CD4-positive, alpha-beta memory T cell (primary cell): ENCODE measurements at regions of chr12 and their contacts with region 1.

Region 1: GRCh38 chr12:14257734-14258574 is 107.5 kb upstream of the ATF7IP start:
- DNase-seq: peak; percentile 81 to 92 (median 84)
- H3K4me3 ChIP-seq: peak overlapping the region; percentile 1 to 31
- H3K4me3 Mint-ChIP-seq: peak overlapping the region; percentile 75 to 91 (median 84)
- H3K27ac ChIP-seq: peak overlapping the region; percentile 49
- H3K27ac Mint-ChIP-seq: peak overlapping the region; percentile 95 to 99 (median 98)
- H3K4me1 ChIP-seq: peaks cover 44% of the 10 kb centered on the region
- H3K4me1 Mint-ChIP-seq: peaks cover 35 to 57% (median 42%) of the 10 kb centered on the region in 4 donors
- H3K27me3 ChIP-seq: no peaks in the 10 kb centered on the region
- H3K27me3 Mint-ChIP-seq: no peaks in the 10 kb centered on the region

Region 2: DNA sequence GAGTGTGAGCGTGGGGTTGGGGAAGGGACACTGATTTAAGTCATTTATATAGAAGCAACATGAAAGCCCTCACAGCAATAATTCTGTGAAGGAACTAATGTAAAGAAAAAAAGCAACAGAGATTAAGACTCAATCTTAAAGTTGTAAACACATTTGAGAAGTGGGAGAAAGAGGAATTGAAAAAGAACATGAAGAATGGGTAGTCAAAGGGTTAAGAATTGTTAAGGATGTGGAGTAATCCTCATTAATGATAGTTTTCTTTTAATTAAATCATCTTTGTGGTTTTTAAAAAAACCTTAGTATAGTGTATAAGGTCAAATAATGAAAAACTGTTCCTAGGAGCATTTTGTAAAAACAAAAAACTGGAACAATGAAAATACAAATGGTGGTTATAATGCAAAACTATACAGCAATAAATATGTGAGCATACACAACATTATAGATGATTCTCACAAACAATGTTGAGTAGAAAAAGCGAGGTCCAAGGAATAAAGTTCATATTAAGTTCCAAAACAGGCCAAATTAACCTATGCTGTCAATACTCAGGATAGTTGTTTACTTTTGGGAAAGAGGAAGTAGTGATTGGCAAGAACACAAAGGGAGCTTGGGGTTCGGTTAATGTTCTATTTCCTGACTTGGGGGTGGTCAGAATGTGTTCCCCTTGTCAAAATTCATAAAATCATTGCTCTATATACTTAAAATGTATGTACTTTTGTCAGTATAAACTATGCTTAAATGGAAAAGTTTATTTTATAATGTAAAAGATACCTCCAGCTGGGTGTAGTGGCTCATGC is 12.9 kb before region 1 on chr12:
- CTCF ChIA-PET with region 1: interaction called, 57 read pairs
- POLR2A ChIA-PET with region 1: interaction called, 33 read pairs
- intact Hi-C with region 1: no loop called
- DNase-seq: no peak
- H3K4me3 ChIP-seq: no peak overlapping the region
- H3K4me3 Mint-ChIP-seq: no peak overlapping the region
- H3K27ac ChIP-seq: no peak overlapping the region
- H3K27ac Mint-ChIP-seq: no peak overlapping the region
- H3K4me1 ChIP-seq: peaks cover 6% of the 10 kb centered on the region
- H3K4me1 Mint-ChIP-seq: peaks cover 5 to 10% (median 8%) of the 10 kb centered on the region in 4 donors
- H3K27me3 ChIP-seq: no peaks in the 10 kb centered on the region
- H3K27me3 Mint-ChIP-seq: no peaks in the 10 kb centered on the region

Region 3: GRCh38 chr12:14394317-14395073 is 136.5 kb after region 1 on chr12:
- CTCF ChIA-PET with region 1: interaction called, 20 read pairs
- POLR2A ChIA-PET with region 1: interaction called, 34 read pairs
- intact Hi-C with region 1: loop called (anchors 1 kb)
- DNase-seq: peak; percentile 74 to 84 (median 75)
- H3K4me3 ChIP-seq: peak overlapping the region in 1 of 2 donors; percentile 25
- H3K4me3 Mint-ChIP-seq: peak overlapping the region; percentile 78 to 89 (median 83)
- H3K27ac ChIP-seq: peak overlapping the region; percentile 73
- H3K27ac Mint-ChIP-seq: peak overlapping the region; percentile 93 to 98 (median 97)
- H3K4me1 ChIP-seq: peaks cover 98% of the 10 kb centered on the region
- H3K4me1 Mint-ChIP-seq: peaks cover 55 to 94% (median 75%) of the 10 kb centered on the region in 4 donors
- H3K27me3 ChIP-seq: no peaks in the 10 kb centered on the region
- H3K27me3 Mint-ChIP-seq: no peaks in the 10 kb centered on the region

Region 4: GRCh38 chr12:14417715-14418114 is 159.8 kb after region 1 on chr12:
- CTCF ChIA-PET with region 1: interaction called, 22 read pairs
- POLR2A ChIA-PET with region 1: interaction called, 19 read pairs
- intact Hi-C with region 1: loop called (anchors 1 kb)
- DNase-seq: peak; percentile 70 to 86 (median 79)
- H3K4me3 ChIP-seq: no peak overlapping the region
- H3K4me3 Mint-ChIP-seq: peak overlapping the region; percentile 72 to 88 (median 84)
- H3K27ac ChIP-seq: peak overlapping the region; percentile 34
- H3K27ac Mint-ChIP-seq: peak overlapping the region; percentile 66 to 95 (median 86)
- H3K4me1 ChIP-seq: peaks cover 73% of the 10 kb centered on the region
- H3K4me1 Mint-ChIP-seq: peaks cover 46 to 73% (median 59%) of the 10 kb centered on the region in 4 donors
- H3K27me3 ChIP-seq: no peaks in the 10 kb centered on the region
- H3K27me3 Mint-ChIP-seq: no peaks in the 10 kb centered on the region

Region 5: GRCh38 chr12:14454098-14454907 is 196.3 kb after region 1 on chr12:
- CTCF ChIA-PET with region 1: interaction called, 4 read pairs
- POLR2A ChIA-PET with region 1: interaction called, 6 read pairs
- intact Hi-C with region 1: loop called (anchors 1 kb)
- DNase-seq: peak in 4 of 5 donors; percentile 22 to 38 (median 27)
- H3K4me3 ChIP-seq: no peak overlapping the region
- H3K4me3 Mint-ChIP-seq: peak overlapping the region in 5 of 8 donors; percentile 38 to 69 (median 46)
- H3K27ac ChIP-seq: no peak overlapping the region
- H3K27ac Mint-ChIP-seq: peak overlapping the region; percentile 66 to 89 (median 75)
- H3K4me1 ChIP-seq: peaks cover 39% of the 10 kb centered on the region
- H3K4me1 Mint-ChIP-seq: peaks cover 41 to 70% (median 49%) of the 10 kb centered on the region in 4 donors
- H3K27me3 ChIP-seq: no peaks in the 10 kb centered on the region
- H3K27me3 Mint-ChIP-seq: no peaks in the 10 kb centered on the region

Region 6: GRCh38 chr12:15763328-15763727 is 1505.4 kb after region 1 on chr12:
- CTCF ChIA-PET with region 1: no interaction called
- POLR2A ChIA-PET with region 1: no interaction called
- intact Hi-C with region 1: no loop called
- DNase-seq: no peak
- H3K4me3 ChIP-seq: no peak overlapping the region
- H3K4me3 Mint-ChIP-seq: no peak overlapping the region
- H3K27ac ChIP-seq: no peak overlapping the region
- H3K27ac Mint-ChIP-seq: no peak overlapping the region
- H3K4me1 ChIP-seq: no peaks in the 10 kb centered on the region
- H3K4me1 Mint-ChIP-seq: peaks cover 0 to 3% (median under 1%) of the 10 kb centered on the region in 4 donors
- H3K27me3 ChIP-seq: no peaks in the 10 kb centered on the region
- H3K27me3 Mint-ChIP-seq: peaks cover 3 to 11% of the 10 kb centered on the region in 2 donors

Region 7: DNA sequence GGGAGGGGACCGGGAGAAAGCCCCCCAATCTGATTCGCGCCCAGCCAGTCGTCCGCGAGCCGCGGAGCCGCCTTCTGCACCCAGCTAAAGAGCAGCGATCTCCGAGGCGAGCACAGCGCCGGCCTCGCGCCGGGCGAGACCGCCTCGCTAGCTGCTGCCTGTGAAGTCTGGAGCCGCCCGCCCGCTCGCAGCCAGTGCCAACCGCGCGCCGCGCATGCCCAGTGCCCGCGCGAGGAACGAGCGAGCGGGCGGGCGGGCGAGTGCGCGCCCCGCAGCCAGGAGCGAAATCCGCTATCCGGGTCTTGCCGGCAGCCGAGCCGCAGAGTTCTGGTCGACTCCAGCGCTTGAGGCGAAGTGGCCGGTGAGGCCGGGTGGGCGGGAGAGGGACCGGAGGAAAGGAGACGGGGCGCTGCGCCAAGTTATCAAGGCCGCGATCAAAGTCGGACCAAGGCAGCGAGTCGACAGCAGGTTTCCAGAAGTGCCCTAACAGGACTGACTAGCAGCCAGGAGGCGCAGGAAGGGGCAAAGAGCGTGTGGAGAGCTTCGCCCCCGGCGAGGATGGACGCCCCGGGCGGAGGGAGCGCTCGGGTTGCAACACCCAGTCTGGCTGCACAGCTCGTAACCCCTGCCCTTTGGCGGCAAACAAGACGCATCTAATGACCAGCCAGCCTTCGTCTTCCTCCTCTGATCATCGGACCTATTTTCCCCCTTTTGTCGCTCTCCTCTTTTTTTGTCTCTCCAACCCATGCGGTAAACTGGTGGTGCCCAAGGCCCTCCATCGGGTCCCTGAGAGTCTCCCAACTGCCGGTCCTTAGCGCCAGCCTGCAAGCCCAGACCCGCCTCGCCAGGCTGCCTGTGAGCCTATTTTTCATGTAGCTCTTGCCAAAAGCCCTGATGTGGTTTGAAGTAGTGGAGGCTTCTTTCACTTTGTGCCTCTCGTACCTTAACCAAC is 1531.5 kb after region 1 on chr12 and contains the start of gene EPS8:
- CTCF ChIA-PET with region 1: no interaction called
- POLR2A ChIA-PET with region 1: no interaction called
- intact Hi-C with region 1: loop called (anchors 2 kb)
- DNase-seq: peak; percentile 85 to 90 (median 90)
- H3K4me3 ChIP-seq: peak within 1 kb of the TSS; percentile 58 to 78
- H3K4me3 Mint-ChIP-seq: peak within 1 kb of the TSS; percentile 90 to 98 (median 96)
- H3K27ac ChIP-seq: peak within 1 kb of the TSS; percentile 38
- H3K27ac Mint-ChIP-seq: peak within 1 kb of the TSS; percentile 86 to 93 (median 90)
- H3K4me1 ChIP-seq: peaks cover 19% of the 10 kb centered on the region
- H3K4me1 Mint-ChIP-seq: peaks cover 12 to 19% (median 15%) of the 10 kb centered on the region in 4 donors
- H3K27me3 ChIP-seq: peaks cover 21% of the 10 kb centered on the region
- H3K27me3 Mint-ChIP-seq: peaks cover 12 to 29% of the 10 kb centered on the region in 2 donors
- total RNA-seq, gene EPS8: 2.6 to 3.8 TPM